MCF 10A (cell line): ENCODE measurements at regions of chr4 and their contacts with region 1.

Region 1: DNA sequence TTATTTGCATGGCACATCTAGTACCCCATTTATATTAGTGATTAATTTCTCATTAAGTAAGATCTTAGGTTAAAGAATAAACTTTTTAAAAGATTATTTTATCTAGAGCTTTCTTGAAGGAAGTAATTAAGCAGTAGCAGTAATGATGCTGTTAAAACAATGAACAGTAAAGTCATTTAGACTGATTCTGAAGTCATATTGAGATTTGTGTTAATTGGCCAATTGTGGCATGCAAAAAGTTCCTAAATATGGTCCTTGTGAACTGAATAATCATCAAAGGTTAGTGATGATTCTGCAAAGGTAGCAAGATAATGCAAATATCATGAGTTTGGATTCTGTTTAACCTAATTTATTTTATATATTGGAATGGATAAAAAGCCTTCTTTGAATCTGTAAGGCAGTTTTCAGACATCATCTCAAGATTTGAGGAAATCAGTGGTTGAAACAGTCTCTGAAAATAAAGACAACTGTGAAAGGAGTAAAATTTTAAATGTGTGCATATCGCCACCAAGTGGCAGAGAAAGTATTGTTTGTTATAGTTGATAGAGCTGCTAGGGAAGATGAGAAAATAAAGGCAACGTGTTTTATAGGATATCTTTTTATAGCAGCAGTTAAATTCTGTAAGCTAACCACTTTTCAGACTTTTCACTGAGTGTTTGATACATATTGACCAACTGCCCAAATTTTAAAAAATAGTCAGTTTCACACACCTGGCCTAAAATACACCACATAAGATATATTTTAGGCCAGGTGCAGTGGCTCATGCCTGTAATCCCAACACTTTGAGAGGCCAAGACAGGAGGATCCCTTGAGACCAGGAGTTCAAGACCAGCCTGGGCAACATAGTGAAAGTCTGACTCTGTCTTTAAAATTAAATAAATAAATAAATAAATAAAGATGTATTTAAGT is 79.6 kb downstream of the CCKAR start:
- DNase-seq: peak; percentile 63
- H3K4me3 Mint-ChIP-seq: no peak overlapping the region
- H3K27ac Mint-ChIP-seq: no peak overlapping the region
- H3K4me1 Mint-ChIP-seq: peaks cover 10% of the 10 kb centered on the region
- H3K27me3 Mint-ChIP-seq: no peaks in the 10 kb centered on the region
- CTCF ChIP-seq: peak; percentile 48

Region 2: GRCh38 chr4:25986807-25987206 is 423.8 kb before region 1 on chr4:
- CTCF ChIA-PET with region 1: interaction called, 88 read pairs
- POLR2A ChIA-PET with region 1: interaction called, 4 read pairs
- intact Hi-C with region 1: loop called (anchors 1 kb)
- DNase-seq: no peak
- H3K4me3 Mint-ChIP-seq: no peak overlapping the region
- H3K27ac Mint-ChIP-seq: no peak overlapping the region
- H3K4me1 Mint-ChIP-seq: no peaks in the 10 kb centered on the region
- H3K27me3 Mint-ChIP-seq: no peaks in the 10 kb centered on the region
- CTCF ChIP-seq: no peak